Heart right ventricle (tissue), 16 donors: ENCODE measurements at regions of chr18 and their contacts with region 1.

Region 1: GRCh38 chr18:76803814-76804213 is 18.5 kb upstream of the ZNF236 start:
- DNase-seq: peak; percentile 30 to 63
- ATAC-seq: peak in 5 of 8 donors; percentile 60 to 69 (median 64)
- H3K4me3 ChIP-seq: no peak overlapping the region
- H3K27ac ChIP-seq: no peak overlapping the region
- H3K4me1 ChIP-seq: peaks cover 0 to 18% (median 6%) of the 10 kb centered on the region in 9 donors
- H3K27me3 ChIP-seq: peaks cover 0 to 25% (median 9%) of the 10 kb centered on the region in 7 donors
- CTCF ChIP-seq: peak; percentile 47 to 84 (median 79)

Region 2: DNA sequence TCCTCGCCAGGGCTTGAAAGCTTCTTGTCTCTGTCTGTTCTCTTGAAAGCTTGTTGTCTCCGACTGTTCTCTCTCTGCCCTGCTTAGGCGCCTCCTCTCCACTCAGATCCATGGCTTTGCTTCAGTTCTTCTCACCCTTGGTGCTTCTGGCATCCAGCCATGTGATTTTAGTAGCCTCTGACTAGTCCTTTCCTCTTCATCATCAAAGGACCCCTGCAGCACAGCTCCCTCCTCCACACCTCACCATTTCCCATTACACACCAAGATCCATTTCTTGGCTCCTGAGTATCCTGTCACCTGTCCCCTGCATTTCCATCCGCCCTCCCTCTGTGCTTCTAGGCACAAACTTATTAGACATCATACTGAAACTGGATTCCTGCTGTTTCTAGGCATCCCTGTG is 77.9 kb after region 1 on chr18:
- intact Hi-C with region 1: loop called in 2 of 10 experiments (anchors 10 kb)
- DNase-seq: no peak
- ATAC-seq: no peak
- H3K4me3 ChIP-seq: no peak overlapping the region
- H3K27ac ChIP-seq: no peak overlapping the region
- H3K4me1 ChIP-seq: no peaks in the 10 kb centered on the region
- H3K27me3 ChIP-seq: no peaks in the 10 kb centered on the region
- CTCF ChIP-seq: no peak

Region 3: DNA sequence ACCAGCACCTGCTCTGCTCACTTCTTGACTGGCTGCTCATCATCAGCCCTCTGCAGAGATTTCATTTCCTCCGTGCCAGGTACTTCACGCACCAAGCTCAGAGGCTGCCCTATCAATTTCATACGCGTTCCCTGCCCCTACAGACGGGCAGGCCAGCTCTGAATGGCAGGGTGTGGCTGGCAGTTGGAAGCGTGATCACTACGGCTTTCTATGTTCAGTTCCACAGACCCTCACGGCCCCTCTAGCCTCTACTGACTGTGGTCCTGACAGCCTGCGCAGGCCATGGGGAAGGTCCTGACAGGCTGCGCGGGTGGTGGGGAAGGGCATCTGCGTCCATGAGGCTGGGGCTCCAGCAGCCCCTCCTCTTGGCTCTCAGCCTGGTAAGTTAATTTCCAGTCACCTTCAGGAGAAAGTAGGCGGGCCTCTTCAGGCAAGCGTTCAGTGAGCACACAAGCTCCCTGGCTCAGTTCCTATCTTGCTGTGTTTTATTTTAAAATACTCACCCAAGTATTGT is 173.4 kb after region 1 on chr18:
- intact Hi-C with region 1: loop called in 7 of 10 experiments (anchors 2 to 10 kb)
- DNase-seq: no peak
- ATAC-seq: peak in 6 of 8 donors; percentile 25 to 73 (median 50)
- H3K4me3 ChIP-seq: peak overlapping the region in 3 of 10 donors; percentile 18 to 26 (median 24)
- H3K27ac ChIP-seq: no peak overlapping the region
- H3K4me1 ChIP-seq: peaks cover 0 to 16% (median 4%) of the 10 kb centered on the region in 9 donors
- H3K27me3 ChIP-seq: no peaks in the 10 kb centered on the region
- CTCF ChIP-seq: no peak

Region 4: GRCh38 chr18:77207540-77207939 is 403.7 kb after region 1 on chr18:
- intact Hi-C with region 1: loop called in 1 of 10 experiments (anchors 5 kb)
- DNase-seq: peak; percentile 24 to 57
- ATAC-seq: peak in 7 of 8 donors; percentile 40 to 63 (median 54)
- H3K4me3 ChIP-seq: no peak overlapping the region
- H3K27ac ChIP-seq: peak overlapping the region in 6 of 10 donors; percentile 4 to 80 (median 24)
- H3K4me1 ChIP-seq: peaks cover 3 to 43% (median 16%) of the 10 kb centered on the region in 9 donors
- H3K27me3 ChIP-seq: no peaks in the 10 kb centered on the region
- CTCF ChIP-seq: peak in 8 of 9 donors; percentile 20 to 60 (median 48)

Region 5: GRCh38 chr18:77702686-77703085 is 898.9 kb after region 1 on chr18:
- intact Hi-C with region 1: loop called in 1 of 10 experiments (anchors 5 kb)
- DNase-seq: peak in 1 of 2 donors; percentile 10
- ATAC-seq: no peak
- H3K4me3 ChIP-seq: no peak overlapping the region
- H3K27ac ChIP-seq: no peak overlapping the region
- H3K4me1 ChIP-seq: no peaks in the 10 kb centered on the region
- H3K27me3 ChIP-seq: peaks cover 0 to 24% (median 6%) of the 10 kb centered on the region in 7 donors
- CTCF ChIP-seq: peak in 5 of 9 donors; percentile 21 to 48 (median 31)